Astrocyte of the cerebellum (primary cell): ENCODE measurements at regions of chr21 and their contacts with region 1.

Region 1: DNA sequence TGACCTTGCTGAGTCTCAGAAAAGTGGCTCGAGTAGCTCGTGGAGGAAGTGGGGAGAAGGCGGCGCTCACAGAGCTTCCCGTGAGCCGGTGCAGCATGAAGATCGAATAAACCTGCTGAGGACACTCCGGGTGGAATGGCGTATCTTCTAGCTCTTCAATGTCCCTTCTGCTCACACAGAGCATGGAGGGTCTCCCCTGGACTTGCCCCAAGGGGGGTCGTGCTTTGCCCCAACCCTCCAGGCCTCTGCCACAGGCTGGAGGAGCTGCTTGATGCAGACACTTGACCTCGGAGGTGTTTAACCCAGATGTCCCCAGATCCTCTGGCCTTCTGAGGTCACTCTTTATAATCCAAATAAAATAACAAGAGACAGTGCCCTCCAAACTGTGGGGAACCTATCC is 2.2 kb upstream of the KRTAP10-12 start:
- DNase-seq: no peak
- H3K4me3 ChIP-seq: no peak overlapping the region
- CTCF ChIP-seq: no peak

Region 2: DNA sequence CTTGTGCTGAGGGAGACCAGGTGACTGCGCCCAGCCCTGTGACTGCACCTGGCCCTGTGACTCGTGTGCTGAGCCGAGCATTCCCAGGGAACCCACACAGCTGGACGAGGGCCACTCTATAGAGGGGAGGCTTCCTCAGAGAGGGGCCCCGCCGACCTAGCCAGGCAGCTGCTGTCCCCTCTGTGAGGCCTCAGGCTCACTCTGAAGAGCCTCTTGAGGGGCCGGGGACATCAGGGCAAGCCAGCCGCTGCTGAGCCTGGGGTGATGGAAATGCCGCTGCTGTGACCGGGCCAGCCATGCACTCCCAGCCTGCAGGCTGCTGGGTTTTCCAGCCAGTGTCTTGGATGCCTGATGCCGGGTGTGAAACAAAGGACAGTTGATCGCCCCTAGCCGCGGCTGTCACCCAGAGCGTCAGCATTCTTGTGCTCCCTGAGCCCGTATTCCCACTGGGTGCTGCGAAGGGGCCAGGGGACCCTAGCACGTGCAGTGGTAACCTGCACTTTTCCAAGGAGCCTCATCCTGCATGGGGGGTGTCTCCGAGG is 377.5 kb before region 1 on chr21:
- in situ Hi-C with region 1: no loop called
- DNase-seq: no peak
- H3K4me3 ChIP-seq: no peak overlapping the region
- CTCF ChIP-seq: no peak

Region 3: GRCh38 chr21:44647222-44647552 is 47.6 kb before region 1 on chr21:
- in situ Hi-C with region 1: loop called (anchors 5 kb)
- DNase-seq: no peak
- H3K4me3 ChIP-seq: no peak overlapping the region
- CTCF ChIP-seq: no peak